HEK293 (cell line): ENCODE measurements at regions of chr14 and their contacts with region 1.

Region 1: GRCh38 chr14:23910101-23910875 is 43.3 kb upstream of the DHRS4 start:
- H3K4me3 ChIP-seq: no peak overlapping the region
- H3K27ac ChIP-seq: no peak overlapping the region
- H3K4me1 ChIP-seq: no peaks in the 10 kb centered on the region
- CTCF ChIP-seq: 0 out of 2 replicates have a peak, but pooled peaks have one; percentile 12

Region 2: DNA sequence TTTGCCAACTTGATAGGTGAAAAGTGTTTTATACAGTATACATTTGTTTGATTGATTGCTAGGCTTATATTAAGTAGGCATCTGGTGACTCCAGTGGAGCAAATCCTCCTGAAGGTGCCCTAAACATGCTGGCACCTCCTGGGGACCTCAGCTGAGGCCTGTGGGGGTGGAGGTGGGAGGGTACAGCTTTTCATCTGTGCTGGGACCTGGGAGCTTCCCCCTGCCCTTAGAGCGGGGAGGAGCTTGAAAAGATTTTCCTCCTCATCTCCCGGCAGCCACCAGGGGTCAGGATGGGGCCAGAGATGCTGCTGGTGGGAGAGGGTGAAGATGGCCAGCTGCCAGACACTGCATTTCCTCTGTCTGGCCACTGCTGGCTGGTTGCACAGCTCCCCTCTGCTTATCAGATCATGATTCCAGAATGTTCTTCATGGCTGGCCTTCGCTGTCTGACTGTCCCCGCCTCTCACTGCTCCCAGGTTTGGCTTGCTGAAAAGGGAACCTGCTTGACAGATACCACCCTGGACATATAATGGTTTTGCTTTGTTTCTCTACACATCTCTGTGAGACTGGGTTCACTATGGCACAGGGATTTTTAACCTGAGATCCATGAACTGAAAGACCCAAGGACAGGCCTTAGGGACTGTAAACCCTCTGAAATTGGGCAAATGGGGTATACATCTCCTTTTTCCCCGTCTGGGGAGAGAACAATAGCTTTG is 321.2 kb before region 1 on chr14:
- CTCF ChIA-PET with region 1: interaction called, 20 read pairs
- POLR2A ChIA-PET with region 1: no interaction called
- H3K4me3 ChIP-seq: no peak overlapping the region
- H3K27ac ChIP-seq: no peak overlapping the region
- H3K4me1 ChIP-seq: no peaks in the 10 kb centered on the region
- CTCF ChIP-seq: peak; percentile 95

Region 3: GRCh38 chr14:23665375-23666192 is 244.7 kb before region 1 on chr14:
- CTCF ChIA-PET with region 1: interaction called, 25 read pairs
- POLR2A ChIA-PET with region 1: no interaction called
- H3K4me3 ChIP-seq: no peak overlapping the region
- H3K27ac ChIP-seq: no peak overlapping the region
- H3K4me1 ChIP-seq: no peaks in the 10 kb centered on the region
- CTCF ChIP-seq: no peak

Region 4: GRCh38 chr14:23694085-23694975 is 216.0 kb before region 1 on chr14:
- CTCF ChIA-PET with region 1: interaction called, 10 read pairs
- POLR2A ChIA-PET with region 1: no interaction called
- H3K4me3 ChIP-seq: no peak overlapping the region
- H3K27ac ChIP-seq: peak overlapping the region; percentile 44; the same call in 1 of the 2 replicates
- H3K4me1 ChIP-seq: 0 out of 2 replicates have a peak, but pooled peaks cover 5% of the 10 kb centered on the region
- CTCF ChIP-seq: no peak

Region 5: DNA sequence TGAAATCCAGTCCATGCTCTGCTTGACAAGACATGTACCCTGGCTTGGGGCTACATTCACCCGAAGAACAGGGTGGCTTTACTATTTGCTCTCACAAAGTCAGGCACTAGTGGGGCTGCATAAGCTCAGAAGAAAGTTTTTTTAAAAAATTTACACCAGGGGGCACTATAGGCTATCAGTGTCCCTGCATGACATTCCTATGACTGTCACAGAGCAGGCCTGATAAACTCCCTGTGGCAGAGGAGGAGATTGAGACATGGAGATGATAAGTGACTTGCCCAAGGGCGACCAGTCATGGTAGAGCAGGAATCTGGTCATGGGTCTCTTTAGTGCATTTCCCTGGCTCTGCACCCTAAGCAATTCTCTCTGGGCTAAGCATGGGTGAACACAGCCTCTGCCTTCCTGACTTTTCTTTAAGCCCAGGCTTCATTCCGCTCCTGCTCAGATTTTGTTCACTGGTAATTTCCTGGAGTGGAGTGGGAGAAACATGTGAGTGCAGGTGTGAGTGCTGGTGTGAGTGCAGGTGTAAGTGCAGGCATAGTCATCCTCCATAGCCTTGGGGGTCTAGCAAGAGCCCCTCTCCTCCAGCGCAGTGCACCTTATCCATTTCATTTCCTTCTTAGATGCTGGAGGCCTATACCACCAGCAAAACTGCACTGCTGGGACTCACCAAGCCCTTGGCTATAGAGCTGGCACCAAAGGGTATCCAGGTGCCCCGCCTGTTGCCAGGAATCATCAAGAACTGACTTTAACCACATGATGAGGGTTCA is 182.5 kb before region 1 on chr14:
- CTCF ChIA-PET with region 1: interaction called, 31 read pairs
- POLR2A ChIA-PET with region 1: no interaction called
- H3K4me3 ChIP-seq: no peak overlapping the region
- H3K27ac ChIP-seq: no peak overlapping the region
- H3K4me1 ChIP-seq: no peaks in the 10 kb centered on the region
- CTCF ChIP-seq: no peak

Region 6: GRCh38 chr14:23922545-23922944 is 12.3 kb after region 1 on chr14:
- CTCF ChIA-PET with region 1: interaction called, 13 read pairs
- POLR2A ChIA-PET with region 1: interaction called, 3 read pairs
- H3K4me3 ChIP-seq: no peak overlapping the region
- H3K27ac ChIP-seq: no peak overlapping the region
- H3K4me1 ChIP-seq: no peaks in the 10 kb centered on the region
- CTCF ChIP-seq: no peak

Region 7: GRCh38 chr14:23929822-23930294 is 19.6 kb after region 1 on chr14:
- CTCF ChIA-PET with region 1: interaction called, 14 read pairs
- POLR2A ChIA-PET with region 1: interaction called, 3 read pairs
- H3K4me3 ChIP-seq: no peak overlapping the region
- H3K27ac ChIP-seq: no peak overlapping the region
- H3K4me1 ChIP-seq: no peaks in the 10 kb centered on the region
- CTCF ChIP-seq: peak; percentile 36; the same call in 1 of the 2 replicates